ENCODE measurements at regions of chr21 and their contacts with region 1.

Region 1: DNA sequence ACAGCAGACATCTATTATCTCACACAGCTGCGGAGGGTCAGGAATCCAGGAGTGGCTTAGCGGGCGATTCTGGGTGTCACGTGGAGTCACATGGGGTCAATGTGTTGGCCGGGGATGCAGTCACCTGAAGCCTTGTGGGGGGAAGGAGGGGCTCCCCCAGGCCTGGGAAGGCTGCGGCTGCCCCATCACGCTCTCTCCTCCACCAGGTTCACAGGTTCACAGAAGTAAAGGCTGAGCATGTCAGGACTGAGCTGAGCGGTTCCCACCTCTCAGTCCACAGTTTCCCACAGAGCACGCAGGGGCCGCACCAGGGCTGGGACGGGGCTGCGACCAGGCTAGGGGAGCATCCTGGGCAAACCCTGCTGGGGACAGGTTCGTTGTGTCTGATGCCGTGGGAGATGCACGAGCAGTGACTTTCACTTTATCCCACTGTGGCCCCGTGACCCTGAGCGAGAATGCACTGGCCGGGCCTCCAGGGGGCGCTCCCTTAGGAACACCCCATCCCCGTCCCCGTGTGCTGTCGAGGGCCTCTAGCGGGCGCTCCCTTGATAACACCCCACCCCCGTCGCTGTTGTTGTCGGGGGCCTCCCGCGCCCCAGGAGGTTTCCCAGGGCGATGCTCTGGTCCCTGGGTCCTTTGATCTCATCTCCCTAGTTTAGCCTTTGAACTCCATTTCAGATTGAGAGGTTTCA is 73.2 kb upstream of the TRAPPC10 start:
- DNase-seq: peak; percentile 81 to 93 (median 90)
- ATAC-seq: peak; percentile 98 to 99
- H3K4me3 Mint-ChIP-seq: peak overlapping the region; percentile 84 to 92 (median 89)
- H3K27ac Mint-ChIP-seq: peak overlapping the region; percentile 65 to 95 (median 92)
- H3K4me1 Mint-ChIP-seq: peaks cover 15 to 35% (median 25%) of the 10 kb centered on the region in 4 donors
- H3K27me3 Mint-ChIP-seq: no peaks in the 10 kb centered on the region

Region 2: DNA sequence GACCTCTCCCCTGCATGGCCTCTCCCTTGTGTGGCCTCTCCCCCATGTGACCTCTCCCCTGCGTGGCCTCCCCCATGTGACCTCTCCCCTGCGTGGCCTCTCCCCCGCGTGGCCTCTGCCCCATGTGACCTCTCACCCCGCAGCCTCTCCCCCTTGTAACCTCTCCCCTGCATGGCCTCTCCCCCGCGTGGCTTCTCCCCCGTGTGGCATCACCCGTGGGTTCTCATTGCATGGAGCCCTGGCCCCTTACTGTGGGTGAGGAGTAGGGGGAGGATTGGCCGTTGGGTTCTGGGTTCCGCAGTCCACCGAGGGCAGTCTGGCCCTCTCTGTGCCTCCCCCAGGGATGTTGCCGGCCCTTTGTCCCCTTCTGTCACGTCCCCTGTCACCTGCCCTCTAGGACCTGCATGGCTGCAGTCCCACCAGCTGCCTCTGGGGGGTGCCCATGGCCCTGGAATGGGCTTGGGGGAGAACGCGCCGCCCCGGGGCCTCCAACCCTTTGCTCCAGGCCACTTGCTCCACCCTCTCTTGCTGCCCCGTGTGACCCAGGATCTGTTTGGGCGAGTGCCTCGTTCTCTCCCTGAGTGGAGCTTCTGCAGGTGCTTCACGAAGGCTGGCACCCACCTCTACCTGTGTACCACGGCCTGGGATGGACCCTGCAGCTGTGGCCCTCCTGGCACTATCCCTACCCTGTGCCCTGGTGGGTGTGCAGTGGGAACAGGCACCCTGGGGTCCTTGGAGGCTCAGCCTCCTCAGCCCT is 128.2 kb before region 1 on chr21:
- POLR2A ChIA-PET with region 1: interaction called, 10 read pairs
- DNase-seq: peak; percentile 75 to 93 (median 86)
- ATAC-seq: peak; percentile 91 to 94
- H3K4me3 Mint-ChIP-seq: peak overlapping the region in 4 of 10 donors; percentile 1 to 59 (median 41)
- H3K27ac Mint-ChIP-seq: peak overlapping the region in 8 of 10 donors; percentile 36 to 82 (median 73)
- H3K4me1 Mint-ChIP-seq: peaks cover 10 to 23% (median 17%) of the 10 kb centered on the region in 4 donors
- H3K27me3 Mint-ChIP-seq: no peaks in the 10 kb centered on the region

Region 3: DNA sequence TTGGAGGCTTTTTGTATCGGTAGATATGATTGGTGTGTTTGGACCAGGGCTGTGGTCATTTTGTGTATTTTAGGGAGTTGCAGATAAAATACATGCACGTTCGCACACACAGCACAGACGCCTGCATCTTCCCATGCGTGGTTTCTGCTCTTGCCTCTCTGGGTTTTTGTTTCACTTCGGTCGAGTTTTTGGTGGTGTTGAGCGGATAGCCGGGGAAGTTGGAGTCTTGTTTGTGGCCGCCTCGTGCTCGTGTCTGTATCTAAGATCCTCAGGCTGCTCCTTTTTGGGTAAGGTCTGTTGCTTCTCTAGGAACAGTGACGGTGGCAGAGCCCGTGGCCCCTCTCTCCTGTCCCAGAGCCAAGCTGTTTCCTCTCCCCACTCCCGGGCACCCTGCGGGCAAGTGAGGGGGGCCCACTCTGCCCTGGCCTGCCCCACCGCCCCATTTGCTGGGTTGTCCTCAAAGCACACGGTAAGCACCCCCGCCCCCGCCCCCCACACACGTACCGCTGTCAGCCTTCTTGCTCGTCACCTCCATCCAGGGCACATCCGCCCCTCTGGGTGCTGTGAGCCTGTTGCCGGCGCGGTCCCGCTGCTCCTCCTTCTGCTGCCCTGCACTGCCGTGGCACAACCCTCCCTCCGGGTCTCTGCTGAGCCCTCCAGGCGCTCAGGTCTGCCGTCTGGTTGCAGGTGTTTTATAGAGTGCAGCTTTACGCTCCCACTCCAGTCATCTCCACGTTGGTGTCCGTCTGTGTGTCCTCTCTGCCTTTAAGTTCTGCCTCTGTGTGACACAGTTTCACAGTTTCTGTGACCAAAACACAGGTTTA is 22.0 kb before region 1 on chr21:
- POLR2A ChIA-PET with region 1: interaction called, 15 read pairs
- DNase-seq: peak; percentile 67 to 88 (median 80)
- ATAC-seq: peak; percentile 82 to 85
- H3K4me3 Mint-ChIP-seq: peak overlapping the region; percentile 83 to 97 (median 90)
- H3K27ac Mint-ChIP-seq: peak overlapping the region; percentile 91 to 98 (median 95)
- H3K4me1 Mint-ChIP-seq: peaks cover 41 to 66% (median 65%) of the 10 kb centered on the region in 4 donors
- H3K27me3 Mint-ChIP-seq: no peaks in the 10 kb centered on the region